A549 (cell line): ENCODE measurements at regions of chr17 and their contacts with region 1.

Region 1: DNA sequence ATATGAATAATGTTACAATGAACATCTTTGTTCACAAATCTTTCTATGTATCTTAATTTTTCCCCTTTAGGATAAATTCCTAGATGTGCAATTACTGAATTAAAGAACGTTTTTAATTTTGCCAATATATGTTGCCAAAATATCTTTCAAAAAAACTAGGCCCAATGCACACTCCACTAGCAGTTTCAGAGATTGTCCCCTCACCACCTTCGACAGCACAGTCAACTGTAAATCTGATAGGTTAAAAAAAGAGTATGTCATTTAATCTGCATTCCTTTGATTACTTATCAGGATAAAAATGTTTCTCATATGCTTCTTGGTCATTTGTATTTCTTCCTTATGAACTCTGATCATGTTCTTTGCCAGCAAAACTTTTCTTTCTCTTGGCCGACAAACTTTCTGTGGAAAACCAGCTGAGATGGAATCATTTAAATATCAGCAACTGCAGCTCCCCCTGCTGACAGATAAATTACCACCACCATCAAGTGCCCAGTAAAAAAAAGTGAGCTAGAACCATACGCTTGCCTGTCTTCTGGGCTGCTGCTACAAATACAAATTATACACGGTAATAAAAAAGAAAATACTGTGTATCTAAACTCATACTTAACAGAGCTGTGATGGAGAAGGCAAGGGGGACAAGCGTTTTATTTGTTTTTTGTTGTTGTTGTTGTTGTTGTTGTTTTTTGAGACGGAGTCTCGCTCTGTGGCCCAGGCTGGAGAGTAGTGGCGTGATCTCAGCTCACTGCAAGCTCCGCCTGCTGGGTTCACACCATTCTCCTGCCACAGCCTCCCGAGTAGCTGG is 19.6 kb upstream of the KANSL1 start:
- DNase-seq: peak; percentile 88 to 95
- ATAC-seq: peak; percentile 91 to 92
- H3K4me3 ChIP-seq: no peak overlapping the region
- H3K27ac ChIP-seq: no peak overlapping the region
- H3K4me1 ChIP-seq: no peaks in the 10 kb centered on the region
- CTCF ChIP-seq: peak; percentile 99
- EP300 ChIP-seq: no peak
- POLR2A ChIP-seq: no peak
- RAD21 ChIP-seq: peak; percentile 91

Region 2: GRCh38 chr17:46035112-46035818 is 177.6 kb before region 1 on chr17:
- CTCF ChIA-PET with region 1: interaction called, 12 read pairs
- POLR2A ChIA-PET with region 1: no interaction called
- DNase-seq: no peak
- ATAC-seq: no peak; a peak in 1 of 6 replicates
- H3K4me3 ChIP-seq: no peak overlapping the region
- H3K27ac ChIP-seq: no peak overlapping the region
- H3K4me1 ChIP-seq: no peaks in the 10 kb centered on the region
- CTCF ChIP-seq: no peak
- EP300 ChIP-seq: no peak
- POLR2A ChIP-seq: no peak
- RAD21 ChIP-seq: no peak

Region 3: DNA sequence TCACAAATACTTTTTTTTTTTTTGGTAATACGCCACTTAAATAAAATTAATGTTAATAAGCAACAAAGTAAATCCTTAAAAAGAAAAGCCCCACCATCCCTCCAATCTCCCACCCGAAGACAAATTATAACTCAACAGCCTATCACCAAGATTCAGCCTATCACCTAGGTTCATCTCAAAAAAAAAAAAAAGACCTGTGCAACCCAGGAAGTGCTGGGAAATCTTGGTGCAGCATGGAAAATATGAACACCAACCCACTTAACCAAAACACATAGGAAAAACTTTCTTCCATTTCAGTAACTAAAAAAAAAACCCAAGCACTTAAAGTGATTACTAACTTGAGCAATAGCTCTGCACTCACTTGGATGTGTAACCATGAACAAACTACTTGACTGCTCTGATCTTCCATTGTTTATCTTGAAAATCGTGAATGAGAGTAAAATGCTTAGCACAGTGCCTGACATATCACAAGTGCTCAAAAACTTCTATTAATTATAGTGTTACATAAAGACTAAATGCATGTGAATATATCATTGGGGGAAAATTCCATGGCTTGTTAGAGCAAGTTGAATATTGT is 123.4 kb before region 1 on chr17:
- CTCF ChIA-PET with region 1: interaction called, 11 read pairs
- POLR2A ChIA-PET with region 1: no interaction called
- DNase-seq: no peak
- ATAC-seq: no peak
- H3K4me3 ChIP-seq: no peak overlapping the region
- H3K27ac ChIP-seq: no peak overlapping the region
- H3K4me1 ChIP-seq: peaks cover 10% of the 10 kb centered on the region; the same call in 2 of the 3 replicates
- CTCF ChIP-seq: no peak
- EP300 ChIP-seq: no peak
- POLR2A ChIP-seq: no peak
- RAD21 ChIP-seq: no peak

Region 4: DNA sequence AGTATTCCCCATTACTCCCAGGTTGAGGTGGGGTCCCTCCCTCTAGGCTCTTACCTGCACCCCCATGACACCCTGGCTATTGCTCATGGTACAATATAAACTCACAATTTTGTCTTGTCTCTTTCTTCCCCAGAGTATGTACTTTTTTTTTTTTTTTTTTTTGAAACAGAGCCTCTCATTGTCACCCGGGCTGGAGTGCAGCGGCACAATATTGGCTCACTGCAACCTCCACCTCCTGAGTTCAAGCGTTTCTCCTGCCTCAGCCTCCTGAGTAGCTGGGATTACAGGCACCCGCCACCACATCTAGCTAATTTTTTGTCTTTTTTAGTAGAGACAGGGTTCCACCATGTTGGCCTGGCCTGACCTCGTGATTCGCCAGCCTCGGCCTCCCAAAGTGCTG is 28.1 kb before region 1 on chr17:
- CTCF ChIA-PET with region 1: interaction called, 11 read pairs
- POLR2A ChIA-PET with region 1: no interaction called
- DNase-seq: no peak
- ATAC-seq: no peak
- H3K4me3 ChIP-seq: no peak overlapping the region
- H3K27ac ChIP-seq: no peak overlapping the region
- H3K4me1 ChIP-seq: peaks cover 65% of the 10 kb centered on the region
- CTCF ChIP-seq: no peak
- EP300 ChIP-seq: no peak
- POLR2A ChIP-seq: no peak
- RAD21 ChIP-seq: no peak